Activated T-helper 2 cell treated with anti-CD3 and anti-CD28 coated beads, Interferon-gamma antibody, Interleukin-2, Interleukin-4, amounts not matched to agents 10 μg/mL and 5 μg/mL and 100 μg/mL, durations not matched to agents 14 hours and 24 hours and 36 hours (primary cell): ENCODE measurements at regions of chr5 and their contacts with region 1.

Region 1: DNA sequence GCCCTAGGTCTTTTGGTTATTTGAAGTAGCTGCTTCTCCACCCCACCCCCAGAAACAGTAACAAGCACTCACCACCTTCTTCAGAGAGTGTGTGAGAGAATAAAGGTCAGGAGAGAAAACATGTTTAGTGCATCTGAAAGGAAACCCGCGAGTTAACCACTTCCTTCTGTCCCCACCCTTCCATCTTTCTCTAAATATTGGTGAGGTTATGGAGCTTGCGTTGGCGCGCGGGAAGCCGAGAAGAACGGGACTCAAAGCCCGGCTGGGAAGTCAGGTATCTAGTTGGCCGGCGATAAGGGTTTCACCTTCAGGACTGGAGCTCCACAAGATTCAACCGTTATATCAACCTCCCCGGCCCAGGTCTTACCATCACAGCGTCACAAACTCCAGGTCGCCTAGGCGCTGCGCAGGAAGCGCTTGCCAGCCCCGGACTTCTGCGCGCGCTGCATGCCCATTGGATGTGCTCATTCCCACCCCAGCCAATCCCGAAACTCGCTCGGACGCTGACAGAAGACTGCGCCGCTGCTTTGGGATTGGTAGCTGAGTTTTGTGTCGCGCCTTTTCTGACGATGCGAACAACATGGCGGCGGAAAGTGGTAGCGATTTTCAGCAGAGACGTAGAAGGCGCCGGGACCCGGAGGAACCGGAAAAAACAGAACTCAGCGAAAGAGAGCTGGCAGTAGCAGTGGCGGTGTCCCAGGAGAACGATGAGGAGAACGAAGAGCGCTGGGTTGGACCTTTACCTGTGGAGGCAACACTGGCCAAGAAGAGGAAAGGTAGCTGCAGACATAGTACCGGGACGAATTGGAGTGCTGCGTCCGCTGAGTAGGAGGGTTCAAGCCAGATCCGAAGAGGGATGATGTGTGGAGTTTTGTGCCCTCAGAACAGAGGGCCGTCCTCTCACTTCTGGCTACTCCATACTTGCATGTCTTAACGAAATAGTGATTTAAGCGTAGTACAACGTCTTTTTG is at the starts of genes CENPK and PPWD1:
- DNase-seq: peak; percentile 95
- H3K4me3 Mint-ChIP-seq: peak within 1 kb of the TSS; percentile 91
- H3K27ac Mint-ChIP-seq: peak within 1 kb of the TSS; percentile 97
- H3K4me1 Mint-ChIP-seq: peaks cover 48% of the 10 kb centered on the region
- H3K27me3 Mint-ChIP-seq: no peaks in the 10 kb centered on the region
- total RNA-seq, gene CENPK: 78.0 and 79.2 TPM in 2 replicates
- total RNA-seq, gene PPWD1: 51.9 and 53.8 TPM in 2 replicates

Region 2: GRCh38 chr5:64768358-64769312 is 794.4 kb before region 1 on chr5 and contains the starts of genes CWC27 and SREK1IP1:
- intact Hi-C with region 1: loop called (anchors 5 kb)
- DNase-seq: peak; percentile 79
- H3K4me3 Mint-ChIP-seq: peak within 1 kb of the TSS; percentile 98
- H3K27ac Mint-ChIP-seq: peak within 1 kb of the TSS; percentile 96
- H3K4me1 Mint-ChIP-seq: peaks cover 47% of the 10 kb centered on the region
- H3K27me3 Mint-ChIP-seq: no peaks in the 10 kb centered on the region
- total RNA-seq, gene CWC27: 30.3 and 32.9 TPM in 2 replicates
- total RNA-seq, gene SREK1IP1: 30.9 and 32.9 TPM in 2 replicates

Region 3: DNA sequence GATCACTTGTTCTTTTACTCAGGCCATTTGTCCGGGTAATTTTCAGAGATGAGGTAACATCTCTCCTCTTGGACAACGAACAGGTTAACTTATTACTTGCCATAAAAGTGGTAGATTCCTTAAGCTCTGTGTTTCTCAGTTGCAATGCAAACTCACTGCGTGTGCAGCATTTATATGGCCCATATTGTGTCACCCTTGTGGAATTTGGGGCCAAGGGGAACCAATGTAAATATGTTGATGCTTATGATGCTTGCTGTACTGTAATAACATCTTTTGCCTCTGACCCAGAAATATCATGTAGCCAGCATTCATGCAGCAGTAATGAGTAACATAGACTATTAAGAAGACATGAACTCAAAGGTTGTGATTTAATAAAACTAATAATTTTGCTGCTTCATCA is 257.1 kb before region 1 on chr5:
- intact Hi-C with region 1: no loop called
- DNase-seq: no peak
- H3K4me3 Mint-ChIP-seq: no peak overlapping the region
- H3K27ac Mint-ChIP-seq: no peak overlapping the region
- H3K4me1 Mint-ChIP-seq: no peaks in the 10 kb centered on the region
- H3K27me3 Mint-ChIP-seq: no peaks in the 10 kb centered on the region

Region 4: GRCh38 chr5:65548281-65548680 is 14.7 kb before region 1 on chr5:
- intact Hi-C with region 1: loop called (anchors 2 kb)
- DNase-seq: no peak
- H3K4me3 Mint-ChIP-seq: no peak overlapping the region
- H3K27ac Mint-ChIP-seq: no peak overlapping the region
- H3K4me1 Mint-ChIP-seq: peaks cover 22% of the 10 kb centered on the region
- H3K27me3 Mint-ChIP-seq: no peaks in the 10 kb centered on the region

Region 5: DNA sequence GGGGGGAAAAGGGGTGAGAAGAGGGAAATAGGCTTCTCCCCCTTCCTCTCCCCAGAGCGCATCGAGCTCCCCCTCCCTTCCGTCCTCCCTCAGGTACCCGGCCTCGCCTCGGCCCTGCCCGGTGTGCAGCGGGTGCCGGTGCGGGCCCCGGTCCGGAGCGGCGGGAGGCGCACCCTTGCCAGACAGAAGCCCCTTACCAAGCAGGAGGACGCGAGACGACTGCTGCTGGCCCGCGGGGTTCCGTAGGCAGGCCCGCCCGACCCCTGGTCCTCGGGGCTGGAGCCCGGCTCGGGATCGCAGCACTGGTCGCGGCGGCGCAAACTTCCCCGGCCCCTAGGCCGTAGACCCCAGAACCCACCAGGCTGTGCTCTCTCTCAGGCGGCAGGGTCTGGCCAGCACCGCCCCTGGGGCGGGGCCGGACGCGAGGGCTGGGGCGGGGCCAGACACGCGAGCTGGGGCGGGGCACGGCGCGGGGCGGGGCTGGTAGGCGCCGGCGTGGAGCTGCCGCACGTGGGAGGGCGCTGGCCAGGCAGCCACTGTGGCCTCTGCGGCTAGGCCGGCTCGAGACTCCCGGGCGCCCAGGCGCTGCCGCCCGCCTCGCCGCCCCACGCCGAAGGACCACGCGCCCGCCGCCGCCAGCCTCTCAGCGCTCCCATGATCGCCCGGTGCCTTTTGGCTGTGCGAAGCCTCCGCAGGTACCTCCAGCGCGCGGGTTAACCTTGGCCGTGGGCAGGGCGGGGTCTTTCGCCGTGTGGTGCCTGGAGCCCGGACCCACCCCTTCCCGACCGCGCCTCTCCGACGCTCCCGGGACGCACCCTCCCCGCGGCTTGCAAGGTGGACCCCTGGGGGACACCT is 158.9 kb after region 1 on chr5 and contains the starts of genes NLN and SGTB:
- intact Hi-C with region 1: loop called (anchors 1 kb)
- DNase-seq: peak; percentile 79
- H3K4me3 Mint-ChIP-seq: peak within 1 kb of the TSS; percentile 93
- H3K27ac Mint-ChIP-seq: peak within 1 kb of the TSS; percentile 88
- H3K4me1 Mint-ChIP-seq: peaks cover 29% of the 10 kb centered on the region
- H3K27me3 Mint-ChIP-seq: no peaks in the 10 kb centered on the region
- total RNA-seq, gene NLN: 22.5 and 22.8 TPM in 2 replicates
- total RNA-seq, gene SGTB: 7.6 TPM in 2 replicates

Region 6: DNA sequence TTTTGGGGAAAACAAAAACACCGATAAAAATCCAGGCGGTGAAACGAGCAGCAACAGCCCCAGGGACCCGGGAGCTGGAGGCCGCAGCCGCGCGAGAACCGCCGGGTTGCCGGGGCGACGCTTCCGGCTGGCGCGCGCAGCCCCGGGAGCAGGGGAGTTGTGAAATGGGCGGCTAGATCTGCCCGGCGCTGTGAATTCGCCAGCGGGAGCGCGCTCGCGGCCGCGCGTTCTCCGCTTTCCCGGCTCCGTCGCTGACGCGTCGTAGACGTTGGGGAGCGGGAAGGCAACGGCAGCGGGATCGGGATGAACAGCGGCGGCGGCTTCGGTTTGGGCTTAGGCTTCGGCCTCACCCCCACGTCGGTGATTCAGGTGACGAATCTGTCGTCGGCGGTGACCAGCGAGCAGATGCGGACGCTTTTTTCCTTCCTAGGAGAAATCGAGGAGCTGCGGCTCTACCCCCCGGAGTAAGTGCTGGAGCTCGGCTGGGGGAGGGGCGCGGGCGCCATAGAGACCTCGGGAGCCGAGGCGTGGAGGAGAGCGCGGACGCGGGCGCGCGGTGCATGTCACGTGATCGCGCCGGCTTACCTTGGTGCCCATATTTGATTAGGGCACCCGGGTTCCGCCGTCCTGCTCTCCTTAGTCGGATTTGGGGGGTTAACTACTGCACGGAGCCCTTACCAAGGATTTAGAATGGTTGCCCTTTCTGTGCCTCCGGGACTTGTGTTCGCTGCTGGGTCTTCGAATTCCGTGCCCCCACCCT is 581.2 kb after region 1 on chr5 and contains the start of gene SREK1:
- intact Hi-C with region 1: loop called (anchors 5 kb)
- DNase-seq: peak; percentile 85
- H3K4me3 Mint-ChIP-seq: peak within 1 kb of the TSS; percentile 92
- H3K27ac Mint-ChIP-seq: peak within 1 kb of the TSS; percentile 99
- H3K4me1 Mint-ChIP-seq: peaks cover 37% of the 10 kb centered on the region
- H3K27me3 Mint-ChIP-seq: no peaks in the 10 kb centered on the region
- total RNA-seq, gene SREK1: 67.8 and 69.9 TPM in 2 replicates